Cardiac septum (tissue), 1 donor: ENCODE measurements at regions of chr14 and their contacts with region 1.

Region 1: DNA sequence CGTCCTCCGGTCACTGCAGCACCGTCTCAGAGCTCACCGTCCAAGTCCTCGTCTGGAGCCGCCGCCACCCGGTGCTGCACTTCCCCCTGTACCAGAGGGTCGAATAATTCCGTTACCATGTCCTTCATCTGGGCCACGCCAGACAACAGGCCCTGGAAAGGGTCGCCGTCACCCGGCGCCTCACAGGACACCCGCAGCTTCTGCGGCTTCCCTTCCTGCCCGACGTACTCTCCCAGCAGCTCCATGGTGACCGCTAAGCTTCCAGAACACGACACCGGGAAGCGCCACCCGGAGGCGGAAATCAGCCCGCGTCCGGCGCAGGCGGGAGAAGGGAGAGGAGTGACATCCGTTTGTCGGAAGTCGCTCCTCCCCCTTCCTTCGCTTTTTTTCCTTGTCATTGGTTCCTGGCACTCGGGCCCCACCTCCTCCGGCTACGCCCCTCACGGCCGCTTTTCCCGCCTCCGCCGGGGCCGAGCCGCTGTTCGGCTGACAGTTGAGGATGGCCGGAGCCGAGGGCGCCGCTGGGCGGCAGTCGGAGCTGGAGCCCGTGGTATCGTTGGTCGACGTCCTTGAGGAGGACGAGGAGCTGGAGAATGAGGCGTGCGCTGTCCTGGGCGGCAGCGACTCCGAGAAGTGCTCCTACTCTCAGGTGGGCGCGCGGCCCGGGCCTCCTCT is at the starts of genes GON7 and UBR7:
- DNase-seq: peak; percentile 98
- total RNA-seq, gene GON7: 11.8 TPM
- total RNA-seq, gene UBR7: 25.2 TPM

Region 2: GRCh38 chr14:93184388-93185353 is 22.3 kb before region 1 on chr14 and contains the starts of genes LYSET and MOAP1:
- intact Hi-C with region 1: loop called (anchors 1 kb)
- DNase-seq: peak; percentile 95
- total RNA-seq, gene LYSET: 17.3 TPM
- total RNA-seq, gene MOAP1: 58.1 TPM

Region 3: GRCh38 chr14:93332853-93333630 is 126.1 kb after region 1 on chr14 and contains the start of gene BTBD7:
- intact Hi-C with region 1: loop called (anchors 1 kb)
- DNase-seq: peak; percentile 96
- total RNA-seq, gene BTBD7: 27.7 TPM

Region 4: GRCh38 chr14:93619176-93619793 is 412.4 kb after region 1 on chr14:
- intact Hi-C with region 1: loop called (anchors 10 kb)
- DNase-seq: no peak